Activated T-helper 1 cell treated with anti-CD3 and anti-CD28 coated beads, Interleukin-12 subunit alpha, Interleukin-12 subunit beta, Interleukin-2, Interleukin-4 antibody, amounts not matched to agents 30 ng/mL and 10 ng/mL and 1 ng/mL, durations not matched to agents 14 hours and 24 hours and 36 hours (primary cell): ENCODE measurements at regions of chr11 and their contacts with region 1.

Region 1: GRCh38 chr11:14480716-14481115 is 18.9 kb downstream of the COPB1 start:
- DNase-seq: no peak
- H3K4me3 Mint-ChIP-seq: no peak overlapping the region
- H3K27ac Mint-ChIP-seq: no peak overlapping the region
- H3K4me1 Mint-ChIP-seq: peaks cover 7% of the 10 kb centered on the region
- H3K27me3 Mint-ChIP-seq: no peaks in the 10 kb centered on the region

Region 2: DNA sequence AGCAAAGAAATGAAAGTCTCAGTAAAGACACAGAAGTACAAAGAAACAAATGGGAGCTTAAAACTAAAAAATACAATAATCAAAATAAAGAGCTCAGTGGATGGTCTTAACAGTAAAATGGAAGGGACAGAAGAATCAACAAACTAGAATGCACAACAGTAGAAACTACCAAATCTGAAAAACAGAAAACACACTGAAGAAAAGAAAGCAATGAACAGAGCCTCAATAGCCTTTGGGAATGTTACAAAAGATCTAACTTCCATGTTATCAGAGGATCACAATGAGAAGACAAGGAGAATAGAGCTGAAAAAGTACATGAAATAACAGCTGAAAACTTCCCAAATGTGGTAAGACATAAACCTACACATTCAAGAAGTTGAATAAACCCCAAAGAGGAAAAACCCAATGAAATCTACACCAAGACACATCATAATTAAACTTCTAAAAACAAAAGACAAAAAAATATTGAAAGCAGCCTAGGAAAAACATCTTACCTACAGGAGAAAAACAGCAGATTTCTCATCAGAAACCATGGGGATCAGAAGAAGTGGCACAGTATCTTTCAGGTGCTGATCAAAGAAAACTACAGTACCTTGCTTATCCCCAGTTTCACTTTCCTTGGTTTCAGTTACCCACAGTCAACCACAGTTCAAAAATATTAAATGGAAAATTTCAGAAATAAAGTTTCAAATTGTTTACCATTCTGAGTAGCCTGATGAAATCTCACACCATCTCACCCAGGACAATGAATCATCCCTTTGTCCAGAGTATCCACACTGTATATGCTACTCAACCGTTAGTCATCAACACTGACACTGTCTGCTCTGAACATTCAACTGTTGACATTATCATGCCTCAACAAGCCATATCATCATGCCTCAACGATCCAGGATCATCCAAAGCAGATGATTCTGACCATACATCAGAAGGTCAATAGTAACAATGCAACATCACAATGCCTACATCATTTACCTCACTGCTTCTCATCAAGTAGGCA is 143.9 kb before region 1 on chr11:
- intact Hi-C with region 1: no loop called
- DNase-seq: no peak
- H3K4me3 Mint-ChIP-seq: no peak overlapping the region
- H3K27ac Mint-ChIP-seq: peak overlapping the region; percentile 82
- H3K4me1 Mint-ChIP-seq: peaks cover 58% of the 10 kb centered on the region
- H3K27me3 Mint-ChIP-seq: no peaks in the 10 kb centered on the region

Region 3: DNA sequence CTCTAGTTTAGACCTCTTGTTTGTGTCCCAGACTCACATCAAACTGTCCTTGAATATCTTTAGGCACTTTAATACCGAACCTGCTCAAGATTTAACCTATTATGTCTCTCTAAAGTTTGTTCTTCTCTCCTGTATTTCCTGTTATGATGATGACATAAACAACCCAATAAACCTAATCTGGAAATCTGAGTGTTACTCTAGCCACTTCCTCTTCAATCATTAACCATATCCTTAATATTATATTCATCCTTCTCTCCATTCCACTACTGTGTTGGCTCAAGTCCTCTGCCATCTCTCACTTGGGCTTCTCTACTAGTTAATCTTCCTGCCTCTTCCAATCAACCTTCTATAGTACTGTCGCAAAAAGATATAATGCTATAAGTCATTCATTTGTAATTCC is 17.1 kb before region 1 on chr11:
- intact Hi-C with region 1: loop called (anchors 2 kb)
- DNase-seq: no peak
- H3K4me3 Mint-ChIP-seq: no peak overlapping the region
- H3K27ac Mint-ChIP-seq: no peak overlapping the region
- H3K4me1 Mint-ChIP-seq: peaks cover 5% of the 10 kb centered on the region
- H3K27me3 Mint-ChIP-seq: no peaks in the 10 kb centered on the region

Region 4: GRCh38 chr11:14499554-14500180 is 19.0 kb after region 1 on chr11 and contains the start of gene COPB1:
- intact Hi-C with region 1: loop called (anchors 2 kb)
- DNase-seq: peak; percentile 90
- H3K4me3 Mint-ChIP-seq: peak within 1 kb of the TSS; percentile 100
- H3K27ac Mint-ChIP-seq: peak within 1 kb of the TSS; percentile 98
- H3K4me1 Mint-ChIP-seq: peaks cover 49% of the 10 kb centered on the region
- H3K27me3 Mint-ChIP-seq: no peaks in the 10 kb centered on the region
- total RNA-seq, gene COPB1: 94.8 and 101 TPM in 2 replicates